ENCODE measurements at regions of chr16 and their contacts with region 1.

Region 1: DNA sequence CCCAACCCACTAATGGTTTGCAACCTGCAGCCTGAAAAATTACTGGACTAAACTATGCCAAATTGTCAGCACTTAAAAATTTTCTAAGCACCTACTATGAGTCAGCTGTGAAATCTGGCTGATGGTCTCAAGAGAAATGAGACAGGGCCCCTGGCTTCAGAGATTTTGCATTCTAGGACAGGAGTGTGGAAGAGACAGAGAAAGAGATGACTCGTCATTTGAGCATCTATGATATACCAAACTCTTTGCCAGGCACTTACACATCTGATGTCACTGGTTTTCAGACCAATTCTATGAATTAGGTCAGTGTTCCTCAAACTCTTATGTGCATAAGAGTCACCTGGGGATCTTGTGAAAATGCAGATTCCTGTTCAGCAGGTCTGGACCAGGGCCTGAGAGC is 44.4 kb downstream of the CLEC19A start:
- DNase-seq: no peak
- H3K4me3 ChIP-seq: no peak overlapping the region
- H3K4me3 Mint-ChIP-seq: no peak overlapping the region
- H3K27ac Mint-ChIP-seq: no peak overlapping the region
- H3K4me1 ChIP-seq: no peaks in the 10 kb centered on the region
- H3K4me1 Mint-ChIP-seq: no peaks in the 10 kb centered on the region
- H3K27me3 ChIP-seq: no peaks in the 10 kb centered on the region
- H3K27me3 Mint-ChIP-seq: no peaks in the 10 kb centered on the region
- CTCF ChIP-seq: no peak

Region 2: DNA sequence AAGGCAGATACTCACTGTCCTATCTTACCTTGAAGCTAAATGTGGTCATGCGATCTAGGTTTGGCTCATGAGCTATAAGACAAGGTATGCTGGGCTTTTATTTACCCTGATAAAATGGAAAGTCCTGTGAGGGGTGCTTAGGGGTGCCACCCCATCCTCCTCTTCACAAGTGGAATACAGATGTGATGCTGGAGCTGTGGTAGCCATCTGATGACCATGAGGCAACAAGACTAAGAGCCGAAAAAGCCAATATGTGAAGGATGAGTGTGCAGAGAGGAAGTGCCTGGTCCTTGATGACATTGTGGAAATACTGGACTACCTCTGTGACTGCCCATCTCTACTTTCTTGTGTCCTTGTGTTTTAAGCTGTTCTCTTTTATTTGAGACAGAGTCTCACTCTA is 29.6 kb after region 1 on chr16:
- CTCF ChIA-PET with region 1: no interaction called
- POLR2A ChIA-PET with region 1: no interaction called
- intact Hi-C with region 1: loop called (anchors 2 kb)
- DNase-seq: no peak
- H3K4me3 ChIP-seq: no peak overlapping the region
- H3K4me3 Mint-ChIP-seq: no peak overlapping the region
- H3K27ac Mint-ChIP-seq: no peak overlapping the region
- H3K4me1 ChIP-seq: no peaks in the 10 kb centered on the region
- H3K4me1 Mint-ChIP-seq: no peaks in the 10 kb centered on the region
- H3K27me3 ChIP-seq: no peaks in the 10 kb centered on the region
- H3K27me3 Mint-ChIP-seq: no peaks in the 10 kb centered on the region
- CTCF ChIP-seq: no peak

Measured in Caco-2 (cell line).